Right lobe of liver (tissue), 6 donors: ENCODE measurements at regions of chr16 and their contacts with region 1.

Region 1: DNA sequence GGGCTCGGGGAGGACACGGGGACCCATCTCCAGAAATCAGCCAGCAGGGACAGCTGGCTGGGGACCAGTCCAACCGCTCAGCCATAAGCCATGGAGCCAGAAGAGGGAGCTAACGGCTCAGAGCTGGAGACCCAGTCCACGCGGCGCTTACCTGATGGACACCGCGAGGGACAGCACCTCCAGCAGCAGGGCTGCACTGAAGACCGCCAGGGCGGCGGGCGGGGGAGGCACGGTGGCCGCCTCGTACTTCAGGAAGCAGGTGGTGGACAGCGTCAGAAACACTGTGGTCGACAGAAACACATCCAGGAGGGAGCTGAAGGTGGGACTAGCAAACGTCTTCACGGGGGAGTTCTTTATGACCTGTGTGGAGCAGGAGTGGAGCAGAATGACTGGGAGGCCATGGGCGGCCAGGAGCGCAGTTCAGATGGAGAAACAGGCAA is 102.6 kb upstream of the CREBBP start:
- DNase-seq: peak; percentile 81 to 85 (median 82)
- ATAC-seq: peak; percentile 94 to 98 (median 96)
- H3K4me3 ChIP-seq: no peak overlapping the region
- H3K27ac ChIP-seq: no peak overlapping the region
- H3K4me1 ChIP-seq: no peaks in the 10 kb centered on the region
- H3K27me3 ChIP-seq: no peaks in the 10 kb centered on the region
- CTCF ChIP-seq: peak; percentile 80 to 83 (median 81)
- POLR2A ChIP-seq: no peak

Region 2: DNA sequence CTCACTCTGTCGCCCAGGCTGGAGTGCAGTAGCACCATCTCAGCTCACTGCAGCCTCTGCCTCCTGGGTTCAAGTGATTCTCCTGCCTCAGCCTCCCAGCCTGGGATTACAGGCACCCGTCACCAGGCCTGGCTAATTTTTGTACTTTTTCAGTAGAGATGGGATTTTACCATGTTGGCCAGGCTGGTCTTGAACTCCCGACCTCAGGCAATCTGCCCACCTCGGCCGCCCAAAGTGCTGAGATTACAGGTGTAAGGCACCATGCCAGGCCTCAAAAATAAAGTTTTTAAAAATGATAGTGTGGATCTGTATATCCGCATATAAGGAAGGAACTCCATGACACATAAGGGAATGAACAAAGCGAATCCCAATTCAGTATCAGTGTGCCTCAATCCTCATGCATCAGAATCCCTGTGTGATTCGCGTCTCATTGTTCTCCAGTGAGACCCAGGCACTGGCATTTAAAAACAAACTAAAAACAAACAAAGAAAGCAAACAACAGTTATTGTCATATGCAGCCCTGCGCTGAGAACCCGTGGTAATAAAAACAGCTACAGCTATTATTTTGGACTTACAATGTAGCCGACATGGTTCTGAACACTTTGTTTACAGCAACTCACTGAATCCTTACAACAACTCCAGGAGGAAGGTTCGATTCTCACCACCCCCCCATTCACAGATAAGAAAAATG is 48.5 kb before region 1 on chr16:
- intact Hi-C with region 1: no loop called
- DNase-seq: no peak
- ATAC-seq: no peak
- H3K4me3 ChIP-seq: no peak overlapping the region
- H3K27ac ChIP-seq: no peak overlapping the region
- H3K4me1 ChIP-seq: peaks cover 0 to 9% (median 0%) of the 10 kb centered on the region in 4 donors
- H3K27me3 ChIP-seq: no peaks in the 10 kb centered on the region
- CTCF ChIP-seq: no peak
- POLR2A ChIP-seq: no peak

Region 3: GRCh38 chr16:4176612-4177417 is 193.7 kb after region 1 on chr16:
- intact Hi-C with region 1: loop called (anchors 10 kb)
- DNase-seq: no peak
- ATAC-seq: peak; percentile 14 to 63 (median 38)
- H3K4me3 ChIP-seq: no peak overlapping the region
- H3K27ac ChIP-seq: no peak overlapping the region
- H3K4me1 ChIP-seq: no peaks in the 10 kb centered on the region
- H3K27me3 ChIP-seq: no peaks in the 10 kb centered on the region
- CTCF ChIP-seq: no peak
- POLR2A ChIP-seq: no peak

Region 4: DNA sequence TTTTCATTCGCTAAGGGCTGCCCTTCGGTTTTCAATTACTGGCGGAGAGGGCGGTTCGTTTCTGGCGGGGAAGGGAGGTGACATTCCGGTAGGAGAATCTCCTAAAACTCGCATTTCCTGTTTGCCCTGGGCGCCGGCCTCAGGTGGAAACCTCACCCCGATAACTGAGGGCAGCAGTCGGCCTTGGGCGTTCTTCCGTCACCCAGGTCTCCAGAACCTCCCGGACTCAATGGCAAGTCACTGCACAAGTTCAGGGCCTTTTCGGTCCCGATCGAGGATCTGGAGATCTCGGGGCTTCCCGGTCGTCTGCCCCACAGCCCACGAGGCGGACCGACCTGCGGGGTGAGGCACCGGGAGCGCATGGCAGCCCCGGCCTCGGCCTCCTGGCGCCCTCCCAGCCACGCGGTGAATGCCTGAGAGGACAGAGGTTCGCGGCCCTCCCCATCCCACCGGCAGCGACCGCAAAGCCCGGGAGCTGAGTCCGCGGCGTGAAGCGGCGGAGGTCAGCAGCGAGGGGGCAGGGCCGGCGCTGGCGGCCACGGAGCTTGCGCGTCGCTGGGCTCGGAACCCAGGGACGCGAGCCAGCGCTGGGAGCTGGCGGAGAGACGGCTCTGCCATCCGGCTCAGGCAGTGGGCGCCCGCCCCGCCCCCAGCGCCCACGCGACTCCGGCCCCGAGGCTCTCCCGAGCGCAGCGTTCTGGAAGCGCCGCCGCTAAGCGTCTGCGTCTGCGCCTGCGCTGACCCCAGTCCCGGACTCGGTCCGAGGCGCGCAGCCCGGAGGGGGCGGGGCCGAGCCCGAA is 200.3 kb after region 1 on chr16:
- intact Hi-C with region 1: loop called (anchors 10 kb)
- DNase-seq: peak; percentile 94 to 96 (median 95)
- ATAC-seq: peak; percentile 90 to 94 (median 92)
- H3K4me3 ChIP-seq: peak overlapping the region; percentile 73 to 88 (median 74)
- H3K27ac ChIP-seq: peak overlapping the region; percentile 94 to 98 (median 96)
- H3K4me1 ChIP-seq: peaks cover 0 to 9% (median 3%) of the 10 kb centered on the region in 4 donors
- H3K27me3 ChIP-seq: no peaks in the 10 kb centered on the region
- CTCF ChIP-seq: peak in 1 of 4 donors; percentile 11
- POLR2A ChIP-seq: peak; percentile 87

Region 5: GRCh38 chr16:4261557-4262172 is 278.6 kb after region 1 on chr16:
- intact Hi-C with region 1: loop called in 1 of 2 experiments (anchors 10 kb)
- DNase-seq: peak in 1 of 3 donors; percentile 28
- ATAC-seq: peak; percentile 23 to 57 (median 42)
- H3K4me3 ChIP-seq: no peak overlapping the region
- H3K27ac ChIP-seq: no peak overlapping the region
- H3K4me1 ChIP-seq: no peaks in the 10 kb centered on the region
- H3K27me3 ChIP-seq: no peaks in the 10 kb centered on the region
- CTCF ChIP-seq: peak; percentile 41 to 63 (median 48)
- POLR2A ChIP-seq: no peak